ENCODE measurements at regions of chr1 and their contacts with region 1.

Region 1: DNA sequence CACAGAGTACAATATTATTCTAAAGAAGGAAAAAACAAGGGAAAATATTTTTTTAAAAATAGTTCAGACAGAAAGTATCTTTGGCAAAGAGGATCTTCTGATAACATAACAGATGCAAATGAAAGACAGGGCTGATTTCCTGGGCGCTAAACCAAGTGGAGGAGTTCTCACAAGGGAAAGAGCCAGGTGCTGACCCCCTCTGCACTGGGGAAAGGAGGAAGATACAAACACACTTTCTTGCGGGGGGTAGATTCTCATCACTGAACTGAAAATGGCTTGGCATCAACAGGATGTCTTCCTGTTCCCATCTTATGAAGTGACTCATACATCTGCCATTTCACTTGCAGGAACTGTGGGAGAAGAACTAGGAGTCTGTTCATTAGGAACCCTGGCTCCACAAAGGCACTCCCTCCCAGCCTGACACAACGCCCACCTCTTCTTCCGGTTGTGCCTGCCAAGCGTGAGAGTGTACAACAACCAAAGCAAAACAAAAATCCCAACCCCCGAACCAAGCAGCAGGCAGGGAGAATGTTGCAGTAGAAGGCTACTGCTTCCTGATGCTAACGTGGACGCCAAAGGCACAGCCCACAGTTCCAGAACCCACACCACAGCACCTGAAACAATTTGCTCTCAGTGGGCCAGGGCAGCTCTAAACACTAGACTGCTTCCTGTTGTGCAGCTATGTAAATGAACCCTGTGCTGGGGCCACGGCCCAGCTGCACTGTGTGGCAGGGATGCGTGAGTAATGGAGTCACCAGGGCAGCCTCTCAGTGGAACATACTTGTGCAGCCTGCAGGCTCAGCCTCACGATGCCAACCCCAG is 51.0 kb downstream of the GADD45A start:
- DNase-seq: peak in 7 of 9 experiments; percentile 11 to 71 (median 28)
- ATAC-seq: peak; percentile 81
- H3K4me3 ChIP-seq: peak overlapping the region; percentile 8 to 22
- H3K4me3 Mint-ChIP-seq: peak overlapping the region; percentile 72
- H3K27ac ChIP-seq: peak overlapping the region in 1 of 2 experiments; percentile 52
- H3K27ac Mint-ChIP-seq: peak overlapping the region; percentile 88
- H3K4me1 ChIP-seq: peaks cover 15% of the 10 kb centered on the region
- H3K4me1 Mint-ChIP-seq: peaks cover 19% of the 10 kb centered on the region
- H3K27me3 ChIP-seq: no peaks in the 10 kb centered on the region
- H3K27me3 Mint-ChIP-seq: peaks cover 4% of the 10 kb centered on the region
- CTCF ChIP-seq: no peak

Region 2: GRCh38 chr1:67753776-67754525 is 17.9 kb after region 1 on chr1:
- CTCF ChIA-PET with region 1: interaction called, 20 read pairs
- POLR2A ChIA-PET with region 1: no interaction called
- intact Hi-C with region 1: no loop called
- DNase-seq: no peak
- ATAC-seq: no peak
- H3K4me3 ChIP-seq: no peak overlapping the region
- H3K4me3 Mint-ChIP-seq: no peak overlapping the region
- H3K27ac ChIP-seq: no peak overlapping the region
- H3K27ac Mint-ChIP-seq: no peak overlapping the region
- H3K4me1 ChIP-seq: no peaks in the 10 kb centered on the region
- H3K4me1 Mint-ChIP-seq: no peaks in the 10 kb centered on the region
- H3K27me3 ChIP-seq: no peaks in the 10 kb centered on the region
- H3K27me3 Mint-ChIP-seq: peaks cover 2% of the 10 kb centered on the region
- CTCF ChIP-seq: no peak

Region 3: DNA sequence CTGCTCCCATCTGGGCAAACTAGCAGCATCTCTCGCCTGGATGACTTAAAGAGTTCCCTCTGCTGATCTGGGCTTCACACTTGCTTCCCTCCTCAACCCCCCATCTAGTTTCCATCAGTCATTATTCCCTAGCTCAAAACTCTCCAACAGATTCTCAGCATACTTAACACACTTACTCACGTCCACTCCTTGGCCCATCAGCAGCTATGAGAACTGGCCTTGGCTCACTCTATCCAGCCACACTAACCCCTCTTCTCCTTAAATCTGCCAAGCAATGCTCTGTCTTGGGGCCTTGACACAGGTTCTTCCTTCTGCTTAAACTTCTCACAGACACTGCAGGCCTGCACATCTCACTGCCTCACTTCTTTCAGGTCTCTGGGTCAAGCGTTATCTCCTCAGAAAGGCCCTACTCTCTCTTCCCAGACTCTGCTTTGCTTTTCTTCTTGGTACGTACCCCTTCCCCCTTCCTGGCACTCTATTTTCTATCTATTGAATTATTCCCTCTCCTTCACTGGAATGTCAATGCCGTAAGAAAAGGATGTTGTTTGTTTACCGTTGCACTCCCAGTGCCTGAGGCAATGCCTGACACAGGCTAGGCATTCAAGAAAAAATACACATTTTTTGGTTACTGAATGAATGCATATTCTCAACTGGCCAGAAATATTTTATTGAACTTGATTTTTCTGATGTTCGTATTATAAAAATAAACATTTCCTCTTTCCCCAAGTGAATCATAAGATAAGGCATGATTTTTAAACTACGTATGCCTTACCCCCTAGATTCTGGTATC is 55.9 kb after region 1 on chr1:
- CTCF ChIA-PET with region 1: no interaction called
- POLR2A ChIA-PET with region 1: no interaction called
- intact Hi-C with region 1: no loop called
- DNase-seq: no peak
- ATAC-seq: no peak
- H3K4me3 ChIP-seq: no peak overlapping the region
- H3K4me3 Mint-ChIP-seq: no peak overlapping the region
- H3K27ac ChIP-seq: no peak overlapping the region
- H3K27ac Mint-ChIP-seq: no peak overlapping the region
- H3K4me1 ChIP-seq: no peaks in the 10 kb centered on the region
- H3K4me1 Mint-ChIP-seq: no peaks in the 10 kb centered on the region
- H3K27me3 ChIP-seq: no peaks in the 10 kb centered on the region
- H3K27me3 Mint-ChIP-seq: peaks cover 4% of the 10 kb centered on the region
- CTCF ChIP-seq: no peak

Region 4: GRCh38 chr1:68401511-68401910 is 665.5 kb after region 1 on chr1:
- CTCF ChIA-PET with region 1: no interaction called
- POLR2A ChIA-PET with region 1: no interaction called
- intact Hi-C with region 1: no loop called
- DNase-seq: no peak
- ATAC-seq: no peak
- H3K4me3 ChIP-seq: no peak overlapping the region
- H3K4me3 Mint-ChIP-seq: no peak overlapping the region
- H3K27ac ChIP-seq: no peak overlapping the region
- H3K27ac Mint-ChIP-seq: no peak overlapping the region
- H3K4me1 ChIP-seq: no peaks in the 10 kb centered on the region
- H3K4me1 Mint-ChIP-seq: no peaks in the 10 kb centered on the region
- H3K27me3 ChIP-seq: no peaks in the 10 kb centered on the region
- H3K27me3 Mint-ChIP-seq: no peaks in the 10 kb centered on the region
- CTCF ChIP-seq: no peak

Measured in CD8-positive, alpha-beta T cell (primary cell).